Posterior vena cava (tissue), 2 donors: ENCODE measurements at regions of chr2 and their contacts with region 1.

Region 1: GRCh38 chr2:240225660-240226475 is 85.4 kb upstream of the OTOS start:
- DNase-seq: no peak

Region 2: GRCh38 chr2:240159251-240159839 is 66.5 kb before region 1 on chr2:
- intact Hi-C with region 1: loop called in 1 of 2 experiments (anchors 2 kb)
- DNase-seq: peak; percentile 69

Region 3: DNA sequence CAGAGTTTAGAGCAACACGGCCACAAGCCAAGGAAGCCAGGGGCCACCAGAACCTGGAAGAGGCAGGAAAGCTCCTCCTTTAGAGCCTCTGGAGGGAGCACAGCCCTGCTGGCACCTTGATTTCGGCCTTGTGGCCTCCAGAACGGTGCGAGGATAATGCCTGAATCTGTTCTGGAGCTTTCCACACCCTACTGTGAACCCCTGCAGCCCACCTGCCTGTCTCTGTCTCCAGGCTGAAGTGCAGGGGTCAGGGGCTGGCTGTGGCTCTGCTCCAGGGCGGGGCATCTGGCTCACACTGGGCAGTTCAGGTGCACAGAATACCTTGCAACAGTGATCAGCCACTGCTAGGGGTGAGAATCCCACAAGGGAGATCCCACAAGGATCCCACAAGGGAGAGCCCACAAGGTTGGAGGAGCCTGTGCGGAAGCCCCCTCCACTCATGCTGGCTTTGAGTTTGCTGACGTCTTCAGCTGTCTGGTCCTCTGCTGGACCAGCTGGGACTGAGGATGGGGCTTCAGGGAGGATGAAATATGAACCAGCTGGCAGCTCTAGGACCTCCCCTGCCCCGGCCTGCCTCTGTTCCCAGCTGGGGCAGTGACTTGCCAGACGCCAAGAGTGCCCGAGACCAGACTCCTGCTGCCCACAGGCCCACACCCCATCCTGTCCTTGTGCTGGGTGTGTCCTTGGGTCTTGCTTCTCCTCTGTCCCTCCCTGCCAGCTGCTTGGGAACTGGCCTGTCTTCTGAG is 29.0 kb before region 1 on chr2:
- intact Hi-C with region 1: loop called in 1 of 2 experiments (anchors 1 kb)
- DNase-seq: peak; percentile 70